Caco-2 (cell line): ENCODE measurements at regions of chr9 and their contacts with region 1.

Region 1: DNA sequence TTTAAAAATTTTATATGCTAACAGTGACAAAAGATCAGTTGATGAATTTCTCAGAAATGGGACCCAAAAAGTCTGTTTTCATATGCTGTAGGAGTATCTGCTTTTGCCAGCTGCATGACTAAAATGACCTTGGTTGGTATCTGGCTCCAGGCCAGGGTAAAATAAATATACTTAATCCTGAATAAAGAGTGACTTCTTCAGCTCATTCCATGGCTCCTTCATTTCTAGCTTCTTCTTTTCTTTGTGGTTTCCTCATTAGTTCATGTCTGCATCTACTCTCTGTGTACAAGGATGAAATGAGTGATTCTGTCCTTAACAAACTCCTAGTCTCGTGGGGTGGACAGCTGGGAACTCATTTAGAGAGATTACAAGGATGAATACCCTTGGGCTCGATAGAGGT is 36.0 kb downstream of the RCL1 start:
- DNase-seq: no peak
- H3K4me3 ChIP-seq: no peak overlapping the region
- H3K4me3 Mint-ChIP-seq: no peak overlapping the region
- H3K27ac Mint-ChIP-seq: no peak overlapping the region
- H3K4me1 ChIP-seq: peaks cover 9% of the 10 kb centered on the region; the same call in 1 of the 2 replicates
- H3K4me1 Mint-ChIP-seq: no peaks in the 10 kb centered on the region
- H3K27me3 ChIP-seq: no peaks in the 10 kb centered on the region
- H3K27me3 Mint-ChIP-seq: no peaks in the 10 kb centered on the region
- CTCF ChIP-seq: no peak

Region 2: GRCh38 chr9:4923580-4924544 is 95.1 kb after region 1 on chr9:
- CTCF ChIA-PET with region 1: no interaction called
- POLR2A ChIA-PET with region 1: no interaction called
- intact Hi-C with region 1: loop called (anchors 10 kb)
- DNase-seq: peak in 1 of 2 experiments; percentile 19
- H3K4me3 ChIP-seq: no peak overlapping the region
- H3K4me3 Mint-ChIP-seq: no peak overlapping the region
- H3K27ac Mint-ChIP-seq: no peak overlapping the region
- H3K4me1 ChIP-seq: no peaks in the 10 kb centered on the region
- H3K4me1 Mint-ChIP-seq: no peaks in the 10 kb centered on the region
- H3K27me3 ChIP-seq: no peaks in the 10 kb centered on the region
- H3K27me3 Mint-ChIP-seq: peaks cover 3% of the 10 kb centered on the region
- CTCF ChIP-seq: peak; percentile 32 to 48